CD4-positive, alpha-beta T cell (primary cell): ENCODE measurements at regions of chr10 and their contacts with region 1.

Region 1: DNA sequence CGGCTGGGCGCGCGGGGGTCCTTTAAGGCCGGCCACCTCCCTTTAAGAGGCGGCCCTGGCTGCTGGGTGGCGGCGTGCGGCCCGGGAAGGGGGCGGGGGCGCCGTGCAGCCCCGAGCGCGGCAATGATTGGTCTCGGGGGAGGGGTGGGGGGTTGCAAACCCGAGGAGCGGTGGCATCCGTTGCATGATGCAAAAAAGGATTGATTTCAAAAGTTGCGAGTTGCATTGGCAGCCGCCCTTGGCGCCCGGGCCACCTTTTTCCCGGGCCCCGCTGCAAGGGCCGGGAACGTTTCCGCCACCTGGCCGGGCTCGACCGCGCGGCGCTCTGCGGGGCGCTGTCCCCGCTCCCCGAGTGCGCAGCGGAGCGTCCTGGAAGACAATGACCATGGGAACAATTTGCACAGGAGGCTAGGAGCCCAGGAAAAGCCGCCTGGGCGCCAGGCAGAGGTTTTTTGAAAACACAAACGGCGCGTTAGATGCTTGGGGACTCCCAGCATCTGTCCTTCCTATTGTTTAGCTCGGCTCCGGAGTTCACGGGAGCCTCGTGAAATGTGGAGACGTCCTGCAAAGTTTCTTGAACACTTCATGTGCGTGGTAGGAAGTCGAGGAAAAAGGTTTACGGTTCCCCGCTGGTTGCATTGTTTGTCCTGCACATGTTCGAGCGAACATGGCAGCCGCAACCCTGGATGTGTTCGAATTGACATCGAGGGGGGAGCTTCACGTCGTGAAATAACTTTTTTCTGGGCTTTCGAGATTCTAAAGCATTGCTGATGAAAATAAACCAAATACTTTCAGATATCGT is at the start of gene SEPHS1:
- DNase-seq: peak; percentile 67 to 91 (median 81)
- ATAC-seq: peak; percentile 69
- H3K4me3 ChIP-seq: peak within 1 kb of the TSS; percentile 91
- H3K4me3 Mint-ChIP-seq: peak within 1 kb of the TSS; percentile 98
- H3K27ac ChIP-seq: peak within 1 kb of the TSS; percentile 63 to 83
- H3K27ac Mint-ChIP-seq: peak within 1 kb of the TSS; percentile 93
- H3K4me1 ChIP-seq: peaks cover 50% of the 10 kb centered on the region
- H3K4me1 Mint-ChIP-seq: peaks cover 69% of the 10 kb centered on the region
- H3K27me3 ChIP-seq: no peaks in the 10 kb centered on the region
- H3K27me3 Mint-ChIP-seq: no peaks in the 10 kb centered on the region
- CTCF ChIP-seq: no peak
- total RNA-seq, gene SEPHS1: 13.1 to 17.9 TPM

Region 2: GRCh38 chr10:13160934-13161856 is 187.2 kb before region 1 on chr10 and contains the start of gene MCM10:
- CTCF ChIA-PET with region 1: interaction called, 9 read pairs
- POLR2A ChIA-PET with region 1: interaction called, 4 read pairs
- intact Hi-C with region 1: loop called (anchors 1 to 2 kb)
- DNase-seq: peak; percentile 93 to 99 (median 96)
- ATAC-seq: peak; percentile 100
- H3K4me3 ChIP-seq: peak within 1 kb of the TSS; percentile 53
- H3K4me3 Mint-ChIP-seq: peak within 1 kb of the TSS; percentile 91
- H3K27ac ChIP-seq: peak within 1 kb of the TSS in 1 of 2 donors; percentile 24
- H3K27ac Mint-ChIP-seq: peak within 1 kb of the TSS; percentile 72
- H3K4me1 ChIP-seq: peaks cover 12% of the 10 kb centered on the region
- H3K4me1 Mint-ChIP-seq: peaks cover 16% of the 10 kb centered on the region
- H3K27me3 ChIP-seq: no peaks in the 10 kb centered on the region
- H3K27me3 Mint-ChIP-seq: no peaks in the 10 kb centered on the region
- CTCF ChIP-seq: peak; percentile 94
- total RNA-seq, gene MCM10: 0.16 to 0.50 TPM

Region 3: GRCh38 chr10:15059914-15060313 is 1711.5 kb after region 1 on chr10:
- CTCF ChIA-PET with region 1: no interaction called
- POLR2A ChIA-PET with region 1: no interaction called
- intact Hi-C with region 1: no loop called
- DNase-seq: no peak
- ATAC-seq: no peak
- H3K4me3 ChIP-seq: no peak overlapping the region
- H3K4me3 Mint-ChIP-seq: no peak overlapping the region
- H3K27ac ChIP-seq: no peak overlapping the region
- H3K27ac Mint-ChIP-seq: no peak overlapping the region
- H3K4me1 ChIP-seq: no peaks in the 10 kb centered on the region
- H3K4me1 Mint-ChIP-seq: no peaks in the 10 kb centered on the region
- H3K27me3 ChIP-seq: no peaks in the 10 kb centered on the region
- H3K27me3 Mint-ChIP-seq: peaks cover 6% of the 10 kb centered on the region
- CTCF ChIP-seq: no peak